Naive thymus-derived CD4-positive, alpha-beta T cell (primary cell): ENCODE measurements at regions of chr1 and their contacts with region 1.

Region 1: DNA sequence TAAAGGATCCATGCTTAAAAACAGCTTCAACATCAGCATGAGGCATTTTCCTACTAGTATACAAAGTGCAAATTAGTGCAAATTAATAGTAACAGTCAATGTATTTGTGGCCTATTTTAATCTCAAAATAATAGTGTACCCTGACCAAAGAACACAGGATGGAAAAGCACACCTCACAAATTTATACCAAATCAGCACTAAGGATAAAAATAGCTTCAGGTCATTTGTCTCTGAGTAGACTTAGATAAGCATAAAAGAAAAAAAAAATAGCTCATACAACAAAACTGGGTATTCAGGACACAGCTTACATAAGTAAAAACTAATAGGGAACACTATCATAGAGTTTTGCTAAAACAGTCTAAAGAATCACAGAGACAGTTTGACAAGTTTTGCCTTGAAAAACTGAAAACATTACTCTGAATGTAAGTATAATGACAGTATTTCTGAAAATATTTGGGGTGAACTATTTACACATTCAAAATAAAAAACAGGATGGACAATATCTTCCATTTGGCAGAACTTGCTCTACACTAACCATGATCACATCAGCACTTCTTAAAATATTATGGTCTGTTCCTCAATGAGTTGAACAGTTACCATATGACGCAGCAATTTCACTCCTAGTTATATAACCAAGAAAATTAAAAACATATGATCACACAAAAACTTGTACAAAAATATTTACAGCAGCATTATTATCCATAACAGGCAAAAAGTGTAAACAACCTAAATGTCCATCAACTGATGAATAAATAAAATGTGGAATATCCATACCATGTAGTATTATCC is 46.3 kb downstream of the RNF115 start:
- DNase-seq: no peak
- ATAC-seq: no peak
- H3K4me3 ChIP-seq: no peak overlapping the region
- H3K4me3 Mint-ChIP-seq: no peak overlapping the region
- H3K27ac ChIP-seq: no peak overlapping the region
- H3K27ac Mint-ChIP-seq: peak overlapping the region in 2 of 9 donors; percentile 7 to 23
- H3K4me1 ChIP-seq: no peaks in the 10 kb centered on the region
- H3K4me1 Mint-ChIP-seq: peaks cover 6 to 24% (median 17%) of the 10 kb centered on the region in 7 donors
- H3K27me3 ChIP-seq: no peaks in the 10 kb centered on the region
- H3K27me3 Mint-ChIP-seq: no peaks in the 10 kb centered on the region

Region 2: GRCh38 chr1:145795257-145795881 is 17.8 kb after region 1 on chr1:
- CTCF ChIA-PET with region 1: no interaction called
- POLR2A ChIA-PET with region 1: no interaction called
- intact Hi-C with region 1: no loop called
- DNase-seq: no peak
- ATAC-seq: no peak
- H3K4me3 ChIP-seq: no peak overlapping the region
- H3K4me3 Mint-ChIP-seq: no peak overlapping the region
- H3K27ac ChIP-seq: no peak overlapping the region
- H3K27ac Mint-ChIP-seq: peak overlapping the region in 1 of 9 donors; percentile 41
- H3K4me1 ChIP-seq: no peaks in the 10 kb centered on the region
- H3K4me1 Mint-ChIP-seq: peaks cover 13 to 32% (median 15%) of the 10 kb centered on the region in 7 donors
- H3K27me3 ChIP-seq: no peaks in the 10 kb centered on the region
- H3K27me3 Mint-ChIP-seq: no peaks in the 10 kb centered on the region

Region 3: DNA sequence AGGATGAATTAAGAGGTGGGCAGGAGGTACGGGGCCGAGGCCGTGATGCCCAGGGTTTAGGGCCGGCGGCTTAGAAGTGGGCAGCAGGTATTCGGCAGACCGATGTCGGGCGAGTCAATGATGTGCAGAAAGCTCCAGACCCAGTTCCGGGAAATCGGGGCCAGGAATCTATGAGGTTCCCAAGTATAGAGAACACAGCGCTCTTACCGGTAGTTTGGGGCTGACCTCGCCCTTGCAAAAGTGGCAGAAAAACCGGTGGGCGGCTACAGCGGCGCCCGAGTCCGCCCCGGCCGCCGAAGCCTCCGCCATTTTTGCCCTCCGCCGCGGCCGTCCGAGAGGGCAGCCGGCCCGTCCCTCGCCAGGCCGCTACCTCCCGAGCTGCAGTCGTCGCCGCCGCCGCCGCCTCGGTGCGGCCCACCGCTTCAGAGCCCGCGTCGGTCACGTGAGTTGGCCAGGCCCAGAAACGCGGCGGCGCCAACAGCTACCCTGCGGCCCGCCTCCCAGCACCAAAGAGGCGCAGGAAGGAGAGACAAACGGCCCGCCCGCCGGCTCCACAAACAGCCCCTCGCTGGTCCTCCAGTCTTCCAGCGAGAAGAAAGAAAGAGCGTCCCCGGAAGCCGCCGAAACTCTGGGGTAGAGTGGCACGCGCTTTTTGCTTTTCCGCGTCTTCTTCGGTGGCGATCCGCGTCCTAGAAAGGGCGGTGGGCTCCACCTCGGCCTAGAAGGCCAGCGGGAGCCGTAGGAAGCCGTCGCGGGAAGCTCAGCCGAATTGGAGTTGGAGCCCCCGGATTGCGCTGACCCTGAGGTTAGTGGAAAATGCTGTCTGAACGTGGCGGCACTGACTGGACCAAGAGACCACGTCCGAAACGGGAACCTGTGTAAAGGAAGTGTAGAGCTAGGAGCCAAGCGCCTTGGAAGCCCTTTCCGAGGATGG is 46.3 kb after region 1 on chr1 and contains the starts of genes POLR3C and RNF115:
- CTCF ChIA-PET with region 1: no interaction called
- POLR2A ChIA-PET with region 1: no interaction called
- intact Hi-C with region 1: loop called in 1 of 2 experiments (anchors 10 kb)
- DNase-seq: peak; percentile 63 to 88 (median 82)
- ATAC-seq: peak; percentile 95
- H3K4me3 ChIP-seq: peak within 1 kb of the TSS; percentile 99
- H3K4me3 Mint-ChIP-seq: peak within 1 kb of the TSS; percentile 91 to 100 (median 98)
- H3K27ac ChIP-seq: peak within 1 kb of the TSS; percentile 82
- H3K27ac Mint-ChIP-seq: peak within 1 kb of the TSS; percentile 91 to 98 (median 96)
- H3K4me1 ChIP-seq: peaks cover 10 to 14% of the 10 kb centered on the region in 2 donors
- H3K4me1 Mint-ChIP-seq: peaks cover 19 to 43% (median 35%) of the 10 kb centered on the region in 7 donors
- H3K27me3 ChIP-seq: no peaks in the 10 kb centered on the region
- H3K27me3 Mint-ChIP-seq: no peaks in the 10 kb centered on the region
- total RNA-seq, gene POLR3C: 22.0 to 44.4 (median 32.5) TPM
- total RNA-seq, gene RNF115: 11.4 to 17.3 (median 15.6) TPM

Region 4: GRCh38 chr1:145927063-145927886 is 149.7 kb after region 1 on chr1 and contains the start of gene RBM8A:
- CTCF ChIA-PET with region 1: no interaction called
- POLR2A ChIA-PET with region 1: no interaction called
- intact Hi-C with region 1: no loop called
- DNase-seq: peak; percentile 70 to 98 (median 96)
- ATAC-seq: peak; percentile 98
- H3K4me3 ChIP-seq: peak within 1 kb of the TSS; percentile 98
- H3K4me3 Mint-ChIP-seq: peak within 1 kb of the TSS in 4 of 10 donors; percentile 48 to 85 (median 75)
- H3K27ac ChIP-seq: peak within 1 kb of the TSS; percentile 100
- H3K27ac Mint-ChIP-seq: peak within 1 kb of the TSS in 3 of 9 donors; percentile 56 to 95 (median 94)
- H3K4me1 ChIP-seq: peaks cover 26 to 28% of the 10 kb centered on the region in 2 donors
- H3K4me1 Mint-ChIP-seq: peaks cover 11 to 33% (median 23%) of the 10 kb centered on the region in 7 donors
- H3K27me3 ChIP-seq: no peaks in the 10 kb centered on the region
- H3K27me3 Mint-ChIP-seq: no peaks in the 10 kb centered on the region
- total RNA-seq, gene RBM8A: 115 to 182 (median 120) TPM